ENCODE measurements at regions of chr1 and their contacts with region 1.

Region 1: GRCh38 chr1:155063550-155064110 is at the start of gene EFNA4:
- DNase-seq: peak; percentile 88
- H3K4me3 ChIP-seq: peak within 1 kb of the TSS; percentile 63 to 88 (median 78)
- H3K27ac ChIP-seq: peak within 1 kb of the TSS; percentile 37
- H3K4me1 ChIP-seq: peaks cover 23% of the 10 kb centered on the region
- H3K27me3 ChIP-seq: no peaks in the 10 kb centered on the region
- CTCF ChIP-seq: no peak
- total RNA-seq, gene EFNA4: 5.0 to 5.8 TPM

Region 2: GRCh38 chr1:154669464-154670282 is 394.0 kb before region 1 on chr1:
- CTCF ChIA-PET with region 1: no interaction called
- dilution Hi-C with region 1: no loop called
- in situ Hi-C with region 1: no loop called
- intact Hi-C with region 1: loop called (anchors 1 kb)
- DNase-seq: peak; percentile 57
- H3K4me3 ChIP-seq: no peak overlapping the region
- H3K27ac ChIP-seq: no peak overlapping the region
- H3K4me1 ChIP-seq: no peaks in the 10 kb centered on the region
- H3K27me3 ChIP-seq: no peaks in the 10 kb centered on the region
- CTCF ChIP-seq: peak; percentile 89 to 93

Region 3: DNA sequence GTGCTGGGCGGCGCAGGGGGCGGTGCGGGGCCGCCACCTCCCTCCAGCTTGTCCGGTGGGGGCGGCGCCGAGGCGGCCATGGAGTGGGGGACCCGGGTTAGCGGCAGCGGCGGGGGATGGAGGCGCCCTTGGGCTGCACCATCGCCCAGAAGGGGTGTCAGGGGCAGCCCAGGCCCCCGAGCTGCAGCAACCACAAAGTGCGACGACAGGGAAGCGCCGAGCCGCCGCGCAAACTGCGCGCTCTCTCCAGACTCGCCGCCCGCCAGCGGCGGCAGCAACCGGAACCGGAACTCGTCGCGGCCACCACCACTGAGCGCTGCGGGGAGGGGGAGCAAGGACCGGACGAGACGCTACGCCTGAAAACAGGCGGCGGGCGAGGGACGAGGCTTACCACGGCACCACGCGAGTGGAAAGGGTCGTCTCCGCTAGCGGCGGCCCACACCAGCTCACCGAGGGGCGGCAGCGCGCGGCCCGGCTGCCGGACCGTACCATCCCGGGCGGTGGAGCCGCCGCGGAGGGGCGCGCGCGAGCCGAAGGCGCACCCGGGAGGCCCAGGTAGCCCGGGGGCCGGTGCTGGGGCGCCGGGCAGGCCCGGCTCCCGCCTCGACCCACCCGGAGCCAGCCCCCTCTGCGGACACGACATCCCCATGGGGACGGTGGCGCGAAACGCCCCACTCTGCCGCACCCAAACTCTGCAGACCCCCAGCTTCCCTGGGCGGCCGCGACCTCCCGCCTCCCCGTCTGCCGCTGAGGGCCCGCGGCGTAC is 102.0 kb before region 1 on chr1 and contains the start of gene PYGO2:
- CTCF ChIA-PET with region 1: no interaction called
- dilution Hi-C with region 1: loop called (anchors 5 kb)
- in situ Hi-C with region 1: loop called in 1 of 2 experiments (anchors 5 kb)
- intact Hi-C with region 1: loop called (anchors 1 kb)
- DNase-seq: peak; percentile 81
- H3K4me3 ChIP-seq: peak within 1 kb of the TSS; percentile 55 to 83 (median 71)
- H3K27ac ChIP-seq: peak within 1 kb of the TSS; percentile 49
- H3K4me1 ChIP-seq: peaks cover 24% of the 10 kb centered on the region
- H3K27me3 ChIP-seq: no peaks in the 10 kb centered on the region
- CTCF ChIP-seq: peak; percentile 23 to 32
- total RNA-seq, gene PYGO2: 12.3 to 24.4 TPM

Region 4: DNA sequence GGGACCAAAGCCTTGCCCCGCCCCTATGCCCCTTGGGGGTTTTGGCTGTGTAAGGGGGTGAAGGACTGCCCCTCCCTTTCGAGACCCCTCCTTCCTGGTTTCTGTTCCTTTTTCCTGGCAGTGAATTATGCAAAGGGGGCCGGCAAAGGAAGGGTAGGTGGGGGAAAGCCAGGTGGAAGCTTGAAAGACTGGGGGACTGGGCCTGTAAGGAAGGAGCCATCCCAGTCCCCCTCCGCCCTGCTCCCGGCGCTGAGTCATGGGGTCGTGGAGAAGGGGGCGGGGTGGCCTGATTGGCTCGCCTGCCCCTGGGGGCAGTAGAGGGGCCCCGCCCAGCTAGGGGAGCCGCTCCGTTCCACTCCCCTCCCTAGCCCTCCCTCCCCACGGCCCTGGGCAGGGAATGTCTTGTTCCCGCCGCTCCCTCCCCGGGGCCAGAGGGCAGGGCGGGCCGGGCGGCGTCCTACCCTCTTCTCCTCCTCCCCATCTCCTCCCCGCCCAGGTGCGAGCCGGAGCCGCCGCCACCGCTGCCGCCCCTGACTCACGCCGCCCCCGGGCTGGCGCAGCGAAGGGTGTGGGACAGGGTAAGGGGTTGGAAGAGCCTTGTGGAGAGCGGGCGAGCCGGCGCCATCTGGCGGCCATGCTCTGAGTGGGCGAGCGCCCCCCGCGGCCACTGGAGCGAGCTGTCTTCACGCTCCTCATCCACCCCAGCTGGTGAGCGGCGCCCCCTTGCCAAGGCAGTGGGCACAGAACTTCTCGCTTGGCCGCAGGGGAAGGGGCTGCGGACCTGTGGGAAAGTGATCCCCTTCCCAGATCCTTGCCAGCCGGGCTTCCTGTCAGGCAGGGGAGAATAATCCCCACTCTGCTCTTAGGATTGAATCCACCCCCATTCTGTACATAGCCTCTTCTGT is 46.3 kb before region 1 on chr1:
- CTCF ChIA-PET with region 1: no interaction called
- dilution Hi-C with region 1: loop called (anchors 5 kb)
- in situ Hi-C with region 1: no loop called
- intact Hi-C with region 1: loop called (anchors 1 kb)
- DNase-seq: peak; percentile 99
- H3K4me3 ChIP-seq: peak overlapping the region in 2 of 3 experiments; percentile 12 to 31
- H3K27ac ChIP-seq: peak overlapping the region; percentile 50
- H3K4me1 ChIP-seq: peaks cover 23% of the 10 kb centered on the region
- H3K27me3 ChIP-seq: no peaks in the 10 kb centered on the region
- CTCF ChIP-seq: peak; percentile 97 to 100

Region 5: GRCh38 chr1:155050560-155051341 is 12.9 kb before region 1 on chr1 and contains the start of gene ADAM15:
- CTCF ChIA-PET with region 1: interaction called, 16 read pairs
- dilution Hi-C with region 1: no loop called
- in situ Hi-C with region 1: no loop called
- intact Hi-C with region 1: loop called (anchors 1 kb)
- DNase-seq: peak; percentile 73
- H3K4me3 ChIP-seq: peak within 1 kb of the TSS; percentile 88 to 96 (median 90)
- H3K27ac ChIP-seq: peak within 1 kb of the TSS; percentile 63
- H3K4me1 ChIP-seq: peaks cover 31% of the 10 kb centered on the region
- H3K27me3 ChIP-seq: no peaks in the 10 kb centered on the region
- CTCF ChIP-seq: peak; percentile 72 to 95
- total RNA-seq, gene ADAM15: 111 to 127 TPM

Region 6: GRCh38 chr1:155167166-155168104 is 103.8 kb after region 1 on chr1:
- CTCF ChIA-PET with region 1: no interaction called
- dilution Hi-C with region 1: no loop called
- in situ Hi-C with region 1: no loop called
- intact Hi-C with region 1: loop called (anchors 1 kb)
- DNase-seq: peak; percentile 71
- H3K4me3 ChIP-seq: peak overlapping the region in 2 of 3 experiments; percentile 3 to 5
- H3K27ac ChIP-seq: no peak overlapping the region
- H3K4me1 ChIP-seq: peaks cover 11% of the 10 kb centered on the region
- H3K27me3 ChIP-seq: no peaks in the 10 kb centered on the region
- CTCF ChIP-seq: peak; percentile 91 to 96

Measured in mammary epithelial cell (primary cell).